OCI-LY7 (cell line): ENCODE measurements at regions of chr4 and their contacts with region 1.

Region 1: DNA sequence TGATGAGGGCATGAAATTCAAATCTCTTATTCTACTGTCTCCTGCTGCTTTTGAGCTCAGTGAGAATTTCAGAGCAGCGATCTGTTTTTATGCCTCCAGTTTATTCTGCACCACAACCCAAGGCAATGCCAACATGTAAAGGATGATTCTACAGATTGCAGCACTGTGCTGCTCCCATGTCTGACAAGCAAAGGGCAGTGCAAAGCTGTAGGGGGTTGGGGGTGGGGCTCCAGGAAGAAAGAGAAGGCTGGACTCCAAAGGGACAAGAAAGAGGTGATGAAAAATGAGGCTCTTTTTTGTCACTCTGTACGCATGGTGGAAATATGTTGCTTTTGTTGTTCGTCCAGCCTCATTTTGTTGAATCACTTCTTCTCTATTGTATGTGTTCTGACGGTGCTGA is 254.6 kb downstream of the STIM2 start:
- DNase-seq: no peak
- H3K4me3 ChIP-seq: no peak overlapping the region
- H3K27ac ChIP-seq: no peak overlapping the region
- H3K4me1 ChIP-seq: no peaks in the 10 kb centered on the region
- CTCF ChIP-seq: no peak

Region 2: GRCh38 chr4:26943391-26943790 is 171.8 kb before region 1 on chr4:
- CTCF ChIA-PET with region 1: no interaction called
- POLR2A ChIA-PET with region 1: no interaction called
- intact Hi-C with region 1: no loop called
- DNase-seq: no peak
- H3K4me3 ChIP-seq: no peak overlapping the region
- H3K27ac ChIP-seq: no peak overlapping the region
- H3K4me1 ChIP-seq: peaks cover 16% of the 10 kb centered on the region
- CTCF ChIP-seq: no peak

Region 3: DNA sequence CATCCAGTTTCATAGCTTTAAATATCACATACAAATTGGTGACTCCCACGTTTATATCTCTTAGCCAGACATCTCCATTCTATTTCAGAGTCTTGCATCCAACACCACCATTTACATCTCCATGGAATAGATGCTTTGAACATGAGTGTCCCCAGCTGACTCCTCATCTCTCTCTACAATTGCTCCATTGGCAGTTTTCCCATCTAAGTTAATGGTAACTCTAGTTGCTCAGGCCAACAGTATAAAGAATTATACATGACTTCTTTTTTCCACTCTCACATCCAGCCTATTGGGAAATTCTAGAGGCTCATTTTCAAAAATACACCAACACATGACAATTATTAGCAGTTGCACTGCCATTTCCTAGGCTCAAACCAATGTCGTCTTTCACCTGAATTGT is 133.6 kb after region 1 on chr4:
- CTCF ChIA-PET with region 1: no interaction called
- POLR2A ChIA-PET with region 1: interaction called, 10 read pairs
- intact Hi-C with region 1: no loop called
- DNase-seq: no peak
- H3K4me3 ChIP-seq: no peak overlapping the region
- H3K27ac ChIP-seq: no peak overlapping the region
- H3K4me1 ChIP-seq: no peaks in the 10 kb centered on the region
- CTCF ChIP-seq: no peak

Region 4: GRCh38 chr4:27720010-27720766 is 605.0 kb after region 1 on chr4:
- CTCF ChIA-PET with region 1: no interaction called
- POLR2A ChIA-PET with region 1: no interaction called
- intact Hi-C with region 1: no loop called
- DNase-seq: no peak
- H3K4me3 ChIP-seq: no peak overlapping the region
- H3K27ac ChIP-seq: no peak overlapping the region
- H3K4me1 ChIP-seq: no peaks in the 10 kb centered on the region
- CTCF ChIP-seq: no peak